Dorsolateral prefrontal cortex (tissue), 120 donors: ENCODE measurements at regions of chr4 and their contacts with region 1.

Region 1: GRCh38 chr4:103099691-103100392 is at the start of gene BDH2:
- DNase-seq: peak in 3 of 10 donors; percentile 28 to 46 (median 30)
- H3K4me3 ChIP-seq: peak within 1 kb of the TSS; percentile 31 to 77 (median 58)
- H3K27ac ChIP-seq: peak within 1 kb of the TSS in 58 of 59 donors; percentile 13 to 89 (median 75)
- H3K27me3 ChIP-seq: no peaks in the 10 kb centered on the region
- CTCF ChIP-seq: peak; percentile 79 to 99 (median 92)
- total RNA-seq, gene BDH2: 22.2 to 79.3 (median 39.1) TPM

Region 2: DNA sequence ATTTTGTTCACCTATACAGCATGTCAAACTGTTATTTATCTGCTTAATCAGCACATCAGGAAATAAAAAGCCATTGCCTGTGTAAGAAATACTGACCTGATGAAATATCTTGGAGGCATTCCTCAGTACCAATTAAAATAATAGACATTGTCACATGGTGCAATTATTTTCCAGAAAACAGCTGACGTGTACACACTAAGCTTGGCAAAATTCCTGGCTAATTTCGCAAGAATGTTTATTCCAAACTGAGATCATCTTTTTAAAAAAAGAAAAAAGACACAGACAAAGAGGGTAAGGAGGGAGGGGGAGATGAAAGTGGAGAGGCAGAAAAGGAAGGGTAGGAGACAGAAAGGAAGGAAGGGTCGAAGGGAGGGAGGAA is 660.6 kb before region 1 on chr4:
- intact Hi-C with region 1: loop called in 1 of 2 experiments (anchors 5 kb)
- DNase-seq: no peak
- H3K4me3 ChIP-seq: peak overlapping the region in 3 of 59 donors; percentile 5 to 11 (median 7)
- H3K27ac ChIP-seq: peak overlapping the region in 34 of 59 donors; percentile 2 to 78 (median 44)
- H3K27me3 ChIP-seq: no peaks in the 10 kb centered on the region
- CTCF ChIP-seq: no peak